Sciatic nerve (tissue), 2 donors: ENCODE measurements at regions of chr15 and their contacts with region 1.

Region 1: DNA sequence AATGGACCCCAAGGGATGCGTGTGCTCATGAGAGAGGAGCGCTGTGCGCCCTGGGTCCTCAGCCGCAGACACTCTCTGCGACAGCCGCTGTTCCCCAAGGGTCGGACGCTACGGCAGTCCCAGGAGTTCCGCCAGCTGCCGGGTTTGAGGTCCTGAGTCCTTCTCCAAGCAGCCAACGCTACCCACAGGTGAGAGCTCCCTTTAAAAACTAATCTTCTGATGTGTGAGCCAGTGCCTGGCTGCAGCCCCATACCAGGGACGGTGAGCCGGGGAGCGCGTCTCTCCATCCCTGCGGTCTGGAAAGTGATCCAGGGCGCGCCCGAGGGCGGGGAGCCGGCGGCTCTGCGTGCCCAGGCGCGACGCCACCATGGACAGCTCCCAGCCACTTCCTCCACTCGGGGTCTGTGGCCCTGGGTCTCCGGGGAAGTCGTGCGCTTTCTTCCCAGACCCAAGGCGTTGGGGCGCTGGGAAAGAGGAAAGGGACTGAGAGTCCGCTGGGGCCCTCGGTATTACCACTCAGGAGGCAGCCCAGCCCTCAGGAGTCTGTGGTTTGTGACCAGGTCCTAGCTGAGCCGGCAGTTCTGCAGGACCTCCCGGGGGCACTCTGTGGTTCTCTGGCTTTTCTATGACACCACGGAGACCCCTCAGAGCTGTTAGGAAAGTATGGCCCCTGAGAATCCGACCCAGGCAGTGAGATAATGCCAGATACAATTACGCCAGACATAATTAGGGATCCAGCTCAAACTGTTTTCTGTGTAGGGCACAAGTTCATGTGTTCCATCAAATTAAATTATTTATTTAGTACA is 1.4 kb downstream of the CEMIP start:
- DNase-seq: peak; percentile 77
- ATAC-seq: peak; percentile 40

Region 2: GRCh38 chr15:80455668-80456442 is 324.8 kb before region 1 on chr15:
- intact Hi-C with region 1: loop called (anchors 10 kb)
- DNase-seq: no peak
- ATAC-seq: peak; percentile 82